Kidney (tissue), 22 donors: ENCODE measurements at regions of chr19 and their contacts with region 1.

Region 1: GRCh38 chr19:56090931-56091490 is 30.1 kb downstream of the ZNF787 start:
- DNase-seq: no peak
- H3K4me3 ChIP-seq: no peak overlapping the region
- H3K27ac ChIP-seq: no peak overlapping the region
- H3K4me1 ChIP-seq: no peaks in the 10 kb centered on the region
- H3K27me3 ChIP-seq: no peaks in the 10 kb centered on the region
- CTCF ChIP-seq: no peak

Region 2: GRCh38 chr19:55993492-55993891 is 97.5 kb before region 1 on chr19:
- intact Hi-C with region 1: no loop called
- DNase-seq: no peak
- H3K4me3 ChIP-seq: no peak overlapping the region
- H3K27ac ChIP-seq: no peak overlapping the region
- H3K4me1 ChIP-seq: no peaks in the 10 kb centered on the region
- H3K27me3 ChIP-seq: no peaks in the 10 kb centered on the region
- CTCF ChIP-seq: no peak

Region 3: GRCh38 chr19:56170261-56170660 is 79.2 kb after region 1 on chr19:
- intact Hi-C with region 1: no loop called
- DNase-seq: peak in 1 of 5 donors; percentile 16
- H3K4me3 ChIP-seq: no peak overlapping the region
- H3K27ac ChIP-seq: no peak overlapping the region
- H3K4me1 ChIP-seq: no peaks in the 10 kb centered on the region
- H3K27me3 ChIP-seq: no peaks in the 10 kb centered on the region
- CTCF ChIP-seq: no peak

Region 4: GRCh38 chr19:56189785-56190184 is 98.8 kb after region 1 on chr19:
- intact Hi-C with region 1: no loop called
- DNase-seq: no peak
- H3K4me3 ChIP-seq: no peak overlapping the region
- H3K27ac ChIP-seq: no peak overlapping the region
- H3K4me1 ChIP-seq: no peaks in the 10 kb centered on the region
- H3K27me3 ChIP-seq: no peaks in the 10 kb centered on the region
- CTCF ChIP-seq: no peak

Region 5: DNA sequence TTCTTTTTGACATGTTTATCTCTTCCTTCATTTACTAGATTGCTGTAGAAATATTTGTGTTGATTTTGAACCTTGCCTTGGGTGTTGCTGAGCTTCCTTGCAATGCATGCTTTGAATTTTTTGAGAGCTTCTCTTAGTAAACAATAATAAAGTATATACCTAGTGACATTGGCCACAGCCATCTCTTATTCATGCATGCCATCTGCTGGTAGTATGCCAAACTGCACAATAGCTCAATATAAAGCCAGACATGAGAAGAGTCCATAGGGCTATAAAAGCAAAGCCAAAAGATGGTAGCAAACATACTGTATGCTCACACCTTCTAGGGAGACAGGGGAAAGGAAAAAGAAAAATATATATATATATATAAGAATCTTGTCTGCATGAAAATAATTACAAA is 242.5 kb after region 1 on chr19:
- intact Hi-C with region 1: loop called (anchors 10 kb)
- DNase-seq: peak in 3 of 5 donors; percentile 44 to 64 (median 62)
- H3K4me3 ChIP-seq: no peak overlapping the region
- H3K27ac ChIP-seq: no peak overlapping the region
- H3K4me1 ChIP-seq: no peaks in the 10 kb centered on the region
- H3K27me3 ChIP-seq: no peaks in the 10 kb centered on the region
- CTCF ChIP-seq: peak; percentile 75